MCF 10A (cell line): ENCODE measurements at regions of chrX and their contacts with region 1.

Region 1: GRCh38 chrX:129982274-129983251 is at the start of gene BCORL1:
- DNase-seq: peak; percentile 86
- H3K4me3 Mint-ChIP-seq: no peak within 1 kb of the TSS
- H3K27ac Mint-ChIP-seq: no peak within 1 kb of the TSS
- H3K4me1 Mint-ChIP-seq: peaks cover 10% of the 10 kb centered on the region
- H3K27me3 Mint-ChIP-seq: peaks cover 25% of the 10 kb centered on the region
- CTCF ChIP-seq: no peak
- total RNA-seq, gene BCORL1: 2.9 and 5.1 TPM in 2 replicates

Region 2: DNA sequence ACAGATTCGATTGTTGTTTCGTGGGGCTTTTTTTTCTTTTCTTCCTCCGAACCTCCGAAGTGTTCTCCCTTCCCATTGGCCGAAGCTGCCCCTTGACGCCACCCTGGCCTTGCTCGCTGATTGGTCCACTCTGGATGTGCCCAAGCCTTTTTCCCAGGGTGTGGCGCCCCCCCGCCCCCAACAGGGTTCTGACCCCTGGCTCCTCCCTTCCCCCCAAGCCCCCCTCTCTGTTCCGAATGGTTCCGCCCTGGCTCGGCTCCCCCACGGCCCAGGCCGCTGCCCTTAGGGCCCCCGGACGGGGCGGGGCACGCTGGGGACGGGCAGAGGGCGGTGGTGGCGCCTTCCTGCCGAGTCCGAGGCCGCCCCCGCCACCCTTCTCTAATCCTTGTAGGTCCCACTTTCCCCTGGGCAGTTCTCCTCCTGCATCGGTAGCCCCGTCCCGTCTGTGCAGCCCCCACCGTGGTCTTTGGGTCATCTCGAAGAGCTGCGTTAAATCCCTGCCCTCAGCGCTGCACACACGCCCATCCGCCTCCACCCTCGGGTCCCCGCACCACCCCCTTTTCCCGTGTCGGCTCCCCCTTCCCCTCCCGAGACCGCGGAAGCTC is 51.0 kb before region 1 on chrX:
- CTCF ChIA-PET with region 1: no interaction called
- POLR2A ChIA-PET with region 1: no interaction called
- intact Hi-C with region 1: loop called (anchors 2 kb)
- DNase-seq: peak; percentile 88
- H3K4me3 Mint-ChIP-seq: peak overlapping the region; percentile 78
- H3K27ac Mint-ChIP-seq: peak overlapping the region; percentile 93
- H3K4me1 Mint-ChIP-seq: no peaks in the 10 kb centered on the region
- H3K27me3 Mint-ChIP-seq: peaks cover 25% of the 10 kb centered on the region
- CTCF ChIP-seq: no peak